PC-3 (cell line): ENCODE measurements at regions of chr1 and their contacts with region 1.

Region 1: GRCh38 chr1:53326088-53326597 is 1.7 kb downstream of the LRP8 start:
- DNase-seq: peak; percentile 97
- ATAC-seq: peak; percentile 86
- H3K4me3 ChIP-seq: peak overlapping the region; percentile 89
- H3K27ac ChIP-seq: peak overlapping the region; percentile 92
- H3K4me1 ChIP-seq: peaks cover 17% of the 10 kb centered on the region
- H3K27me3 ChIP-seq: no peaks in the 10 kb centered on the region
- CTCF ChIP-seq: no peak

Region 2: GRCh38 chr1:52786148-52786547 is 540.0 kb before region 1 on chr1:
- CTCF ChIA-PET with region 1: no interaction called
- POLR2A ChIA-PET with region 1: no interaction called
- intact Hi-C with region 1: no loop called
- DNase-seq: no peak
- ATAC-seq: no peak
- H3K4me3 ChIP-seq: no peak overlapping the region
- H3K27ac ChIP-seq: no peak overlapping the region
- H3K4me1 ChIP-seq: no peaks in the 10 kb centered on the region
- H3K27me3 ChIP-seq: no peaks in the 10 kb centered on the region
- CTCF ChIP-seq: no peak

Region 3: DNA sequence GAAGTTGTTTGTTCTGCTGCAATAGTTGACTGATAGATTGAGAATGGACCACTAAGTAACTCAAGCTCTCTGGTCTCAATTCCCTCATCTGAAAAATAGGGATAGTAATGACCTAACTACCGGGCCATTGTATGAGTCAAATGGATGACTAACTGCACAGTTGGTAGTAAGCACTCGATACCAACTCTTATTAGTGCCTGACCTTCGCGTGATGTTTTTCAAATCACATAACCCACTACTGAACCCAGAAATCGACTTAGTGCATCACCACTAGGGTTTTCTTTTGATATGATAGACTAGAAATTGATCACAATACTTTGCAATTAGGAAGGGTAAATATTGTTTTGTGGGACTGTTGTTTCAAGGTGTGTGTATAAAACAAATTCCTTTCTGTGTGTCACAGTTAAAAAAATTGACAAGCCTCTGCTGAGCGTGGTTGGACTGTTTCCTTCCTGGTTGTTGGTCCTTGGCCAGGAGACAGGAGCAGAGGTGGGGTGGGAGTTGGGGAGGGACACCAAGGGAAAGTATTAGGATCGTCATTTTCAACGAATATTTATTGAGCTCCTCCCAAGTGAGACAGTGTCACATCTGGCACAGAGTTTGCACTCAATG is 55.8 kb after region 1 on chr1:
- CTCF ChIA-PET with region 1: no interaction called
- POLR2A ChIA-PET with region 1: no interaction called
- intact Hi-C with region 1: loop called (anchors 2 kb)
- DNase-seq: peak; percentile 85
- ATAC-seq: peak; percentile 90
- H3K4me3 ChIP-seq: peak overlapping the region; percentile 49; the same call in 1 of the 2 replicates
- H3K27ac ChIP-seq: peak overlapping the region; percentile 73
- H3K4me1 ChIP-seq: peaks cover 19% of the 10 kb centered on the region
- H3K27me3 ChIP-seq: no peaks in the 10 kb centered on the region
- CTCF ChIP-seq: no peak